ENCODE measurements at regions of chr6 and their contacts with region 1.

Region 1: GRCh38 chr6:131532580-131533039 is 40.4 kb upstream of the ARG1 start:
- DNase-seq: no peak
- H3K4me3 Mint-ChIP-seq: no peak overlapping the region
- H3K27ac Mint-ChIP-seq: no peak overlapping the region
- H3K4me1 Mint-ChIP-seq: no peaks in the 10 kb centered on the region
- H3K27me3 Mint-ChIP-seq: no peaks in the 10 kb centered on the region
- CTCF ChIP-seq: no peak

Region 2: DNA sequence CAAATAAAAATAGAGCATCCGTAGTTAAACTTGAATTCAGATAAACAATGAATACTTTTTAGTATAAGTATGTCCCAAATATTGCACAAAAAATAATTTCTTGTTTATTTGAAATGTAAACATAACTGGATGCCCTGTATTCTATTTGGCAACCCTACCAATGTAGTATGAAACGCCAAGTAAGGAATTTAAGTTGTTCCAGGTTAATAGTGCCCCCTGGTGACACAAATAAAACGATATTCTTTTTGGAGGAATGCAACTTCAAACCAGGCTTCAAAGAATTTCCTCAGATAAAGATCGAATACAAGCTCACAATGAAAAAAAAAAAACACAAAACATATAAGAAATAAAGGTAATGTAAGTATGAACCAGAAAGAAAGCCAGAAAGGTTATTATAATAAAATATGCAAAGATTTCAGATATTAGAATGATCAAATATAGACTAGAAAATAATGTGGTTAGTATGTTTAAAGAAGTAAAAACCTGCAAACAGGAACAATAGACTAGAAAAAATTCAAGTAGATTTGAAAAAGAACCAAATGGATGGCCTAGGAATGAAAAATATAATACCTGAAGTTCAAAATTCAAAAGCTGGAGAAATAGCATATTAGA is 415.8 kb before region 1 on chr6:
- CTCF ChIA-PET with region 1: interaction called, 3 read pairs
- POLR2A ChIA-PET with region 1: no interaction called
- intact Hi-C with region 1: loop called (anchors 5 kb)
- DNase-seq: peak; percentile 69
- H3K4me3 Mint-ChIP-seq: no peak overlapping the region
- H3K27ac Mint-ChIP-seq: no peak overlapping the region
- H3K4me1 Mint-ChIP-seq: peaks cover 5% of the 10 kb centered on the region
- H3K27me3 Mint-ChIP-seq: no peaks in the 10 kb centered on the region
- CTCF ChIP-seq: peak; percentile 51

Region 3: DNA sequence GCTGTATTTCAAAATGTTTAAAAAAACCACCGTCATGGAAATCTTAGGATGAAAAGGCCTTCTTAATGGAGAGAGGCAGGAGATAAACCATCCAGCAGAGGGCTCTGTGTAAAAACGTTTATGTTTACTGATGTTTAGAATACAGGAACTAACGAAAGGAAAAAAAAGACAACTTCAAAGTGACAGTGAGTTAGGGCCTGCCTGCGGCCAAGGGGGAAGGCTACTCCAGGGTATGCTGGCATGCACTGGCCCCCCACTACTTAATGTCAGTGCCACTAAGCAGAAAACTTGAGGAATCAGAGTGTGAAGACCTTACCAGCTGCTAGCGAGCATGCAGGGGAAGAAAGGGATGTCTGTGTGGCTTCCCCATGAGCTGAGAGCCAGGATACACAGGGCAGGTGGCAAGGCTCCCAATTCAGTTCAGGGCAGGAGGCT is 349.6 kb before region 1 on chr6:
- CTCF ChIA-PET with region 1: interaction called, 8 read pairs
- POLR2A ChIA-PET with region 1: no interaction called
- intact Hi-C with region 1: loop called (anchors 1 kb)
- DNase-seq: peak; percentile 5
- H3K4me3 Mint-ChIP-seq: no peak overlapping the region
- H3K27ac Mint-ChIP-seq: no peak overlapping the region
- H3K4me1 Mint-ChIP-seq: no peaks in the 10 kb centered on the region
- H3K27me3 Mint-ChIP-seq: no peaks in the 10 kb centered on the region
- CTCF ChIP-seq: peak; percentile 20

Region 4: GRCh38 chr6:131199568-131200272 is 332.9 kb before region 1 on chr6:
- CTCF ChIA-PET with region 1: interaction called, 31 read pairs
- POLR2A ChIA-PET with region 1: no interaction called
- intact Hi-C with region 1: loop called (anchors 1 kb)
- DNase-seq: peak; percentile 67
- H3K4me3 Mint-ChIP-seq: no peak overlapping the region
- H3K27ac Mint-ChIP-seq: no peak overlapping the region
- H3K4me1 Mint-ChIP-seq: no peaks in the 10 kb centered on the region
- H3K27me3 Mint-ChIP-seq: no peaks in the 10 kb centered on the region
- CTCF ChIP-seq: peak; percentile 77

Region 5: GRCh38 chr6:131303338-131303954 is 229.2 kb before region 1 on chr6:
- CTCF ChIA-PET with region 1: no interaction called
- POLR2A ChIA-PET with region 1: no interaction called
- intact Hi-C with region 1: no loop called
- DNase-seq: no peak
- H3K4me3 Mint-ChIP-seq: no peak overlapping the region
- H3K27ac Mint-ChIP-seq: no peak overlapping the region
- H3K4me1 Mint-ChIP-seq: peaks cover 9% of the 10 kb centered on the region
- H3K27me3 Mint-ChIP-seq: no peaks in the 10 kb centered on the region
- CTCF ChIP-seq: no peak

Region 6: DNA sequence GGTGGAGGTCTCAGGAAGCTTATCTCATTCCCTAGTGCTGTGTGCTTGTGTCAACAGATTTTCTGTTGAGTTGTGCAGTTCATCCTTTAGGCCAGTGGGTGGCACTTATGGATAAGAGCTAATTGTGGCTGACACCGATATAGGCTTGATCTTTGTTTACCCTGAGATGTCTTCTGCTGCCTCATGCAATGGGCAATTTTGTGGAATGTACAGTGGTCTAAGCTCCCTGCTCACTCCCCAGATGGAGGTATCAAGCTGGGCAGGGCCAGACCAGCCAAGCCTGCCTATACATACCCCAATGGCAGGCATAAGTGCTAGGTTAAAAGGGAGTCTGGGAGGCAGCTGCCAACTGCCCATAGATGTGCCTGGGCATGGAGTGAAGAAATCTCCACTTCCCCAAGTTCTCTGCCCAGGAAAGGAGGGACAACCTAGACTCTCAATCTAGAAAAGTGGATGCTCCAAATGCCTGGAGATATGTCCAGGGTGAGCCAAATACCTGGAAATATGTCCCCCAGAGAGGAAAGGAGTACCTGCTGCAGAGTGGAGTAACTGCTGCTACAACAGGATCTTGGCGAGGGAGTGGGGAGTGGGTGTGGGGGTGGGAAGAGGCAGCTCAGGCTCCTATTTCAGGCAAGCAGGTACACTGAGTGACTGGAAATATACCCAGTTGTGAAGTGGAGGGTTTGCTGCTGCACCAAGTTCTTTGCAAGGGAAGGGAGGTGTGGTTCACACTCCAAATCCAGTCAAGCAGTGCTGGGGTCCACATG is 12.8 kb before region 1 on chr6:
- CTCF ChIA-PET with region 1: interaction called, 31 read pairs
- POLR2A ChIA-PET with region 1: no interaction called
- intact Hi-C with region 1: no loop called
- DNase-seq: peak; percentile 58
- H3K4me3 Mint-ChIP-seq: no peak overlapping the region
- H3K27ac Mint-ChIP-seq: no peak overlapping the region
- H3K4me1 Mint-ChIP-seq: no peaks in the 10 kb centered on the region
- H3K27me3 Mint-ChIP-seq: no peaks in the 10 kb centered on the region
- CTCF ChIP-seq: peak; percentile 46

Region 7: GRCh38 chr6:131548441-131548840 is 15.8 kb after region 1 on chr6:
- CTCF ChIA-PET with region 1: interaction called, 12 read pairs
- POLR2A ChIA-PET with region 1: no interaction called
- intact Hi-C with region 1: no loop called
- DNase-seq: no peak
- H3K4me3 Mint-ChIP-seq: no peak overlapping the region
- H3K27ac Mint-ChIP-seq: no peak overlapping the region
- H3K4me1 Mint-ChIP-seq: no peaks in the 10 kb centered on the region
- H3K27me3 Mint-ChIP-seq: no peaks in the 10 kb centered on the region
- CTCF ChIP-seq: no peak

Region 8: GRCh38 chr6:131602781-131603312 is 70.2 kb after region 1 on chr6:
- CTCF ChIA-PET with region 1: no interaction called
- POLR2A ChIA-PET with region 1: no interaction called
- intact Hi-C with region 1: no loop called
- DNase-seq: peak; percentile 45
- H3K4me3 Mint-ChIP-seq: no peak overlapping the region
- H3K27ac Mint-ChIP-seq: no peak overlapping the region
- H3K4me1 Mint-ChIP-seq: no peaks in the 10 kb centered on the region
- H3K27me3 Mint-ChIP-seq: no peaks in the 10 kb centered on the region
- CTCF ChIP-seq: no peak

Measured in MCF 10A (cell line).